Testis (tissue), 5 donors: ENCODE measurements at regions of chr9 and their contacts with region 1.

Region 1: DNA sequence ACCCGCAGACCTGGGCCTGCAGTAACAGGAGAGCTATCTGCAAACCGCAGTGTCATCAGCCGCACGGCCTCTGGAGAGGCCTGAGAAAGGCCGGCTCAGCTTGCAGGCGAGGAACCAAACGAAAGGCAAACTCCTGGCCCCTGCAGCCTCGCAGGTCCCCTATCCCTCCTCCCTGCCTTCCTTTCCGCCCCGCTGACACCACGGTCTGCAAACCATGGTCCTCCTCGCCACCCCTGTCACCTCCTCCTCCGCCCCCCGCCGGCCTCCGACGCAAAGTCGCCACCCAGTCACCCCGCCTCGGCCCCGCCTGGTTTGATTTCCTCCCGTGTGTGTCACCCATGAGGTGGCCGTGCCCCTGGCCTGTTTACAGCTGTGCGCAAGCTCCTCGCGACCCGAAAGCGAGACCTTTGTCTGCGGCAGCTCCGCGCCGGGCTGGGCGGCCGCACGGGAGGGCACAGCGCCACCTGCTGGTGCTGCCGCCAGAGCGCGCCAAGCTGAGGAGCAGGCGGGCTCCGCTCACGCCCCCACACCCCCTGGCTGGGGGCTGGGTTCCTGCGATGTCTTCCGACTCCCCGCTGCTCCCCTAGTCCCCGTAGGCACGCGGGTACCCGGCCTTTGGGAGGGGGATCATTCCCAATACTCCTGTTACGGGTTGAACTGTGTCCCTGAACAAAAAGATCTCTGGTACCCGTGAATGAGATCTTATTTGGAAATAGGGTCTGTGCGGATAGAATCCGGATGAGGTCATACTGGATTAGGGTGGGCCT is 19.4 kb downstream of the GBGT1 start:
- DNase-seq: peak; percentile 84
- H3K4me3 ChIP-seq: peak overlapping the region; percentile 31 to 32
- H3K27ac ChIP-seq: no peak overlapping the region
- H3K4me1 ChIP-seq: peaks cover 26% of the 10 kb centered on the region
- H3K27me3 ChIP-seq: no peaks in the 10 kb centered on the region
- CTCF ChIP-seq: peak; percentile 97 to 99 (median 97)
- POLR2A ChIP-seq: no peak

Region 2: GRCh38 chr9:132857031-132857430 is 287.3 kb before region 1 on chr9:
- intact Hi-C with region 1: no loop called
- DNase-seq: peak; percentile 78
- H3K4me3 ChIP-seq: no peak overlapping the region
- H3K27ac ChIP-seq: no peak overlapping the region
- H3K4me1 ChIP-seq: peaks cover 8% of the 10 kb centered on the region
- H3K27me3 ChIP-seq: no peaks in the 10 kb centered on the region
- CTCF ChIP-seq: no peak
- POLR2A ChIP-seq: no peak

Region 3: DNA sequence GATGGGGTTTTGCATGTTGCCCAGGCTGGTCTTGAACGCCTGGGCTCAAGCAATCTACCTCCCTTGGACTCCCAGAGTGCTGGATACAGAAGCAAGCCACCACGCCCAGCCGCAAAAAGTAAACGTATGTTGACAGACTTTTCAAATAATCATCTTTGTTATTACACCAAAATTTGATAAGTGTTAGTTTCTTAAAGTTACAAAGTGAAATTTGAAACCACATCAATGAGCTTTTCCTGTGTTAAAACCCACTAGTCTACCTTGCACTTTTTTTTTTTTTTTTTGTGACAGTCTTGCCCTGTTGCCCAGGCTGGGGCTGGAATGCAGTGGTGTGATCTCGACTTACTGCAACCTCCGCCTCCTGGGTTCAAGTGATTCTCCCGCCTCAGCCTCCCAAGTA is 235.7 kb before region 1 on chr9:
- intact Hi-C with region 1: no loop called
- DNase-seq: no peak
- H3K4me3 ChIP-seq: no peak overlapping the region
- H3K27ac ChIP-seq: no peak overlapping the region
- H3K4me1 ChIP-seq: no peaks in the 10 kb centered on the region
- H3K27me3 ChIP-seq: no peaks in the 10 kb centered on the region
- CTCF ChIP-seq: no peak
- POLR2A ChIP-seq: no peak

Region 4: GRCh38 chr9:133103183-133103986 is 40.9 kb before region 1 on chr9:
- intact Hi-C with region 1: loop called (anchors 2 kb)
- DNase-seq: peak; percentile 71
- H3K4me3 ChIP-seq: no peak overlapping the region
- H3K27ac ChIP-seq: no peak overlapping the region
- H3K4me1 ChIP-seq: no peaks in the 10 kb centered on the region
- H3K27me3 ChIP-seq: no peaks in the 10 kb centered on the region
- CTCF ChIP-seq: peak; percentile 97 to 98 (median 97)
- POLR2A ChIP-seq: no peak

Region 5: DNA sequence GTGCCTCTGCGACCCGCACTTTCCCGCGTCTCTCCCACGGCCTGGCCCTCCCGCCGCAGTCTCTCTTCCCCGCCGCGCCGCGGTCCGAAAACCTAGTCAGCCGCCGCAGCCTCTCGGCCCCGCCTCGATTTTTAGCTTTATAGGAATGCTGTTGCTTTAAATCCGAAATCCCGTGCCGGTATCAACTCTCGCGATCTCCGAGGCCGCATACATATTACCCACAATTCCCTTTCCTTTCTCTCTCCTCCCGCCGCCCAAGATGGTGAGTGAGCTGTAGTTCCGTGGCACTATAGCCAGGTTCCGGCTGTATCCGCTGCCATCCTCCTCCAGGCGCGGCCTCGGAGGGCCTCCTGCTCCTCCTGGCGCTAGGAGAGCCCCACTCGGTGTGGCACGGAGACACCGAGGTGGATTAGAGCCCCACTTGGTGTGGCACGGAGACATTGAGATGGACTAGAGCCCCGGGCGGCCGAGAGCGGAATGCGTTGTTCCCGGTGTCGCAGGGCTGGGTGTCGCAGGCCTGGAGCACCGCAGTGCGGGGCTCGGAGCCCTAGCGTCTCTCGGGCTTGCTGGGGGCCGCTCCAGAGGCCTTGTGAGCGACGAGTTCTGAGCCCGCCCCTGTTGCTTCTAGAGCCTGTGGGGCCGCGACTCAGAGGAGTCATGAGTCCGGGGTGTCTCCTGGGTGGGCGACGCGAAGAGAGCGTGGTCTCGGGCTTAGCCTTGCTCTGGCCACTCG is 203.8 kb after region 1 on chr9 and contains the starts of genes MED22 and RPL7A:
- intact Hi-C with region 1: no loop called
- DNase-seq: peak; percentile 97
- H3K4me3 ChIP-seq: peak within 1 kb of the TSS; percentile 98 to 99
- H3K27ac ChIP-seq: peak within 1 kb of the TSS; percentile 89 to 90
- H3K4me1 ChIP-seq: peaks cover 24% of the 10 kb centered on the region
- H3K27me3 ChIP-seq: no peaks in the 10 kb centered on the region
- CTCF ChIP-seq: peak in 2 of 3 experiments; percentile 19 to 27
- POLR2A ChIP-seq: no peak
- total RNA-seq, gene MED22: 25.9 to 29.3 TPM
- total RNA-seq, gene RPL7A: 856 to 1,453 TPM